Calu3 (cell line): ENCODE measurements at regions of chr11 and their contacts with region 1.

Region 1: DNA sequence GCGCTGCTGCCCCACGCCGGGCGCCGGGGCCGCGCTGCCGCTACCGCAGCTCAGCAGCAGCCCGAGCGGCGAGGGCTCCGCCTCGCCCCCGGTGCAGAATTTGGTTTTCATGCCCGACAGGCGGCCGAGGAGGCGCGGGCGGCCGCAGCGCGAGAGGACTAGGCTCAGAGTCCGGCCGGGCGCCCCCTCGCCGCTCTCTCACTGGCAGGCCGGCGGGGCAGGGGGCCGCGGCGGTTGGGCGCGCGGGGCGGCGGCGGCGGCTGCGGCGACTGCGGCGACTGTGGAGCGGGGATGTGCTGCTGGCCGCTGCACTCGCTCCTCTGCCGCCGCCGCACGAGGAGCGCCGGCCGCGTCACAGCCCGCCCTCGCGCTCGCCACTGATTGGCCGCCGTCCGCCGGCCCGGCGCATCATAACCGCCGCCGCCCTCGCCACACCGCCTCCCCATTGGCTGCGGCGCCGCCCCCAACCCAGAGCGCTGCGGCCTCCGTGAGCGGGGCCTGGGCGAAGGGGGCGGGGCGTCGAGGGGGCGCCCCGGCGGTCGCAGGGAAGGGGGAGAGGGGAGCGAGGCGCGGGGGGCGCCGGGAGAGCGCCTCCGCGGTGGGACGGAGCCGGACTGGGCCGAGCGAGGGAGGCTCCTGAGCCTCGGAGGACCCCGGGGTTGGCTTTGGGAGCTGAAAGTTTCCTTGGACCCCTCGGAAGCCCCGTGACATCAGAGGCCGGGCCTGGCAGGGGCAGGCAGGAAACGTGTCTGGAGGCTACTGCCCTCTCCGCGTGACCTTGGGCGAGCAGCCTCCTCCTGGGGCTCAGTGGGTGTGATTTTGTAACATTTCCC is at the start of gene CHKA:
- DNase-seq: peak; percentile 96
- H3K4me3 Mint-ChIP-seq: peak within 1 kb of the TSS; percentile 80
- H3K27ac Mint-ChIP-seq: peak within 1 kb of the TSS; percentile 97
- H3K4me1 Mint-ChIP-seq: peaks cover 63% of the 10 kb centered on the region
- H3K27me3 Mint-ChIP-seq: no peaks in the 10 kb centered on the region
- CTCF ChIP-seq: no peak
- total RNA-seq, gene CHKA: 100 and 104 TPM in 2 replicates

Region 2: GRCh38 chr11:68106165-68106957 is 14.9 kb before region 1 on chr11:
- CTCF ChIA-PET with region 1: interaction called, 6 read pairs
- intact Hi-C with region 1: loop called (anchors 2 kb)
- DNase-seq: peak; percentile 78
- H3K4me3 Mint-ChIP-seq: peak overlapping the region; percentile 50
- H3K27ac Mint-ChIP-seq: peak overlapping the region; percentile 78
- H3K4me1 Mint-ChIP-seq: peaks cover 51% of the 10 kb centered on the region
- H3K27me3 Mint-ChIP-seq: no peaks in the 10 kb centered on the region
- CTCF ChIP-seq: no peak

Region 3: GRCh38 chr11:68146704-68147474 is 25.6 kb after region 1 on chr11:
- CTCF ChIA-PET with region 1: interaction called, 17 read pairs
- intact Hi-C with region 1: loop called (anchors 2 kb)
- DNase-seq: peak; percentile 85
- H3K4me3 Mint-ChIP-seq: peak overlapping the region; percentile 29
- H3K27ac Mint-ChIP-seq: peak overlapping the region; percentile 90
- H3K4me1 Mint-ChIP-seq: peaks cover 43% of the 10 kb centered on the region
- H3K27me3 Mint-ChIP-seq: no peaks in the 10 kb centered on the region
- CTCF ChIP-seq: no peak

Region 4: GRCh38 chr11:68159665-68160064 is 38.4 kb after region 1 on chr11:
- CTCF ChIA-PET with region 1: no interaction called
- intact Hi-C with region 1: loop called (anchors 5 kb)
- DNase-seq: no peak
- H3K4me3 Mint-ChIP-seq: no peak overlapping the region
- H3K27ac Mint-ChIP-seq: no peak overlapping the region
- H3K4me1 Mint-ChIP-seq: no peaks in the 10 kb centered on the region
- H3K27me3 Mint-ChIP-seq: no peaks in the 10 kb centered on the region
- CTCF ChIP-seq: no peak